Esophagus muscularis mucosa (tissue), 4 donors: ENCODE measurements at regions of chr10 and their contacts with region 1.

Region 1: GRCh38 chr10:27241652-27242472 is 1.3 kb upstream of the ACBD5 start:
- DNase-seq: peak; percentile 97
- H3K4me3 ChIP-seq: peak overlapping the region; percentile 64 to 86 (median 86)
- H3K27ac ChIP-seq: peak overlapping the region; percentile 91 to 97 (median 94)
- H3K4me1 ChIP-seq: peaks cover 20 to 46% (median 39%) of the 10 kb centered on the region in 4 donors
- H3K27me3 ChIP-seq: no peaks in the 10 kb centered on the region
- CTCF ChIP-seq: peak; percentile 13 to 45 (median 35)
- EP300 ChIP-seq: no peak
- POLR2A ChIP-seq: peak; percentile 90

Region 2: DNA sequence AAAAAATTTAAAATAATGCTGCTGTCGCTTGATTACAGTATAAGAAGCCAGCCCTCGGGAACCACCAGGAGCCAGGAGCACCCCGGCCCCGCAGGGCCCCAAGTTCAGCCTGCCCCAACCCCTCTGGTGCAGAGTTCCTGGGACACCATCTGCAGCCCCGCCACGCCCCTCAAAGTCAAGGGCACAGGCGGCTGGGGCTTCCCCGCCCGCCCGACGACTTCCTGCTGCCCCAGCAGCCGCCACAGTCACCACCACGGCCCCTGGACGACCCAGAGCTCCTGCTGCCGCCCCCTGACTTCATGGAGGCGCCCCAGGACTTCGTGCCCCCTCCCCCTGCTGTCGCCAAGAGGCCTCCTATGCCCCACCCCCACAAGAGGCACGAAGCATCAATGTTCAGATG is 648.0 kb before region 1 on chr10:
- intact Hi-C with region 1: no loop called
- DNase-seq: no peak
- H3K4me3 ChIP-seq: no peak overlapping the region
- H3K27ac ChIP-seq: no peak overlapping the region
- H3K4me1 ChIP-seq: no peaks in the 10 kb centered on the region
- H3K27me3 ChIP-seq: peaks cover 0 to 19% (median 0%) of the 10 kb centered on the region in 4 donors
- CTCF ChIP-seq: no peak
- EP300 ChIP-seq: no peak
- POLR2A ChIP-seq: no peak

Region 3: DNA sequence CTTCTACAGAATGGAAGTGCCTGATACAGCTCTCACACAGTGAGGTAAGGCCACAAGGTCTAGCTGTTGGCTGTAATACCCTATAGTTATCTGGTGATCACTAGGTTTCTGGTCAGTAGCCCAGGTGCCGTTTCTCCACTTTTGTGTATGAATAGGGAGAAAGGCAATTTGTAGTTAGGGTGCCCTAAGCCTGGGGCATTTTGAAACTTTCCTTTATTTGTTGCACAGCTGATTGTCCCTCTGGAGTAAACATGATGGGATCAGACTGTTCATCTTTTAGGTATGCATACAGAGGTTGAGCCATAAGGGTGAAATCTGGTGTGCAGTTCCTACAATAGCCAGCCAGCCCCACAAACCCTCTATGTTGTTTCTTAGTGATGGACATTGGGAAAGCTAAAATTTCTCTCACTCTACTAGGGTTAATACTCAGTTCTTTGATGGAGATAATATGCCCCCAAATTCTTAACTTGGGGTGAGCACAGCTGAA is 254.0 kb before region 1 on chr10:
- intact Hi-C with region 1: no loop called
- DNase-seq: peak; percentile 50
- H3K4me3 ChIP-seq: no peak overlapping the region
- H3K27ac ChIP-seq: no peak overlapping the region
- H3K4me1 ChIP-seq: no peaks in the 10 kb centered on the region
- H3K27me3 ChIP-seq: no peaks in the 10 kb centered on the region
- CTCF ChIP-seq: no peak
- EP300 ChIP-seq: no peak
- POLR2A ChIP-seq: no peak

Region 4: DNA sequence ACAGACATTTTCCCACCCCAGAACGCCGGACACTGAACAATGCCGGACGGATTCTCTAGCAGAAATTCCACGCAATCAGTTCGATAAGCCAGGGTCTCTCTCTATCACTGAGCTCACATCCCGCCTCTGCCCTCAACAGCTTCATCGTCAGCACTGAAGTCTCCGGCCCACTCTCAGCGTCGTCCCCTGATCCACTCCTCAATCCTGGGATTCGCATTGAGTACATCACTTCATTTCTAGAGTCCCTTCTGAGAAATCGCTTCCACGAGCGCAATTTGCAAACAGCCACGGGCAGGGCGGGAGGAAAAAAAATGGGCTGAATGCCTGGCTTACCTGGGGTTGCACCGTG is 88.0 kb before region 1 on chr10:
- intact Hi-C with region 1: loop called (anchors 5 kb)
- DNase-seq: no peak
- H3K4me3 ChIP-seq: peak overlapping the region; percentile 74 to 80 (median 80)
- H3K27ac ChIP-seq: peak overlapping the region; percentile 98 to 100 (median 98)
- H3K4me1 ChIP-seq: peaks cover 16 to 48% (median 43%) of the 10 kb centered on the region in 4 donors
- H3K27me3 ChIP-seq: no peaks in the 10 kb centered on the region
- CTCF ChIP-seq: no peak
- EP300 ChIP-seq: no peak
- POLR2A ChIP-seq: no peak

Region 5: GRCh38 chr10:27319752-27320561 is 78.1 kb after region 1 on chr10:
- intact Hi-C with region 1: no loop called
- DNase-seq: no peak
- H3K4me3 ChIP-seq: peak overlapping the region; percentile 31 to 46 (median 44)
- H3K27ac ChIP-seq: peak overlapping the region in 3 of 4 donors; percentile 55 to 76 (median 56)
- H3K4me1 ChIP-seq: peaks cover 0 to 10% (median 4%) of the 10 kb centered on the region in 4 donors
- H3K27me3 ChIP-seq: peaks cover 0 to 16% (median 4%) of the 10 kb centered on the region in 4 donors
- CTCF ChIP-seq: no peak
- EP300 ChIP-seq: no peak
- POLR2A ChIP-seq: no peak